T-cell (primary cell): ENCODE measurements at regions of chr6 and their contacts with region 1.

Region 1: DNA sequence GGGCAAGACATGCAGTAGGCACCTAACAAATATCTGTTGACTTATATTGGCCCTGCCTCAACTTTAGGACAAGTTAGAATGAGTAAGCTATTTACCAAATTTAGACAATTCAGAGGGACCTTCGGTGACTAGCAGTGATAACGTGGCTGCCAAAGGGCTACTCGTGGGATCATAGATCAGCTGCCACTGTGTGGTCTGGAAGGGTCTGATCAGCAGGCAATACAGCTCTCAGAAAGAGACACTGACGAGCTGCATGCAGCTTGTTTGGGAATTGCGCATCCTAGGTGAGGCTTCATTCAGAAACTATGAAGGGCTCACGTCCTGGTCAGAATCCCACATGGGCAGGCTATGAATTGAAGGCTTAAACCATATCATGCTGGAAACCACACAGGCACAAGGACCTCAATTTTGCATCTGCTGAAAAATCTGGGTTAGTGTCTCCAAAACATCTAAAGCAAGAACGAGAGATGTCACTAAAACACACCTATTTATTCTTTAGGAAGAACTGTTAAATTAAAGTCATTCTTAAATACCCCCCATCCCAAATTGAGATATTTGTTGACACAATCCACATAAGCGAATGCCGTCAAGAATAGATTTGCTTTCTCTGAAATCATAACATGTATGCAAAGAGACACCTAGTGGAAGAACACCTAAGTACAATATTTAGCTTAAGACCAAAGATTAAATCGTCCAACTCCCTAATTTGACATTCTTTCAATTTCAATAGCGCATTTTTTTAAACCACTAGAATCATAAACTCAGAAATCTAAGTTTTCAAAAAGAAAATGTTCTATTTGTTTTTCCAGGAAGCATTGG is 79.6 kb downstream of the IPCEF1 start:
- DNase-seq: peak in 3 of 35 experiments; percentile 13 to 78 (median 19)
- ATAC-seq: peak; percentile 76 to 82 (median 79)
- H3K4me3 ChIP-seq: peak overlapping the region; percentile 32
- H3K4me3 Mint-ChIP-seq: peak overlapping the region; percentile 66 to 70 (median 69)
- H3K27ac ChIP-seq: peak overlapping the region; percentile 15
- H3K27ac Mint-ChIP-seq: peak overlapping the region; percentile 75 to 78
- H3K4me1 ChIP-seq: peaks cover 15 to 16% of the 10 kb centered on the region in 2 experiments
- H3K4me1 Mint-ChIP-seq: peaks cover 38 to 44% (median 43%) of the 10 kb centered on the region in 3 donors
- H3K27me3 ChIP-seq: no peaks in the 10 kb centered on the region
- H3K27me3 Mint-ChIP-seq: no peaks in the 10 kb centered on the region

Region 2: DNA sequence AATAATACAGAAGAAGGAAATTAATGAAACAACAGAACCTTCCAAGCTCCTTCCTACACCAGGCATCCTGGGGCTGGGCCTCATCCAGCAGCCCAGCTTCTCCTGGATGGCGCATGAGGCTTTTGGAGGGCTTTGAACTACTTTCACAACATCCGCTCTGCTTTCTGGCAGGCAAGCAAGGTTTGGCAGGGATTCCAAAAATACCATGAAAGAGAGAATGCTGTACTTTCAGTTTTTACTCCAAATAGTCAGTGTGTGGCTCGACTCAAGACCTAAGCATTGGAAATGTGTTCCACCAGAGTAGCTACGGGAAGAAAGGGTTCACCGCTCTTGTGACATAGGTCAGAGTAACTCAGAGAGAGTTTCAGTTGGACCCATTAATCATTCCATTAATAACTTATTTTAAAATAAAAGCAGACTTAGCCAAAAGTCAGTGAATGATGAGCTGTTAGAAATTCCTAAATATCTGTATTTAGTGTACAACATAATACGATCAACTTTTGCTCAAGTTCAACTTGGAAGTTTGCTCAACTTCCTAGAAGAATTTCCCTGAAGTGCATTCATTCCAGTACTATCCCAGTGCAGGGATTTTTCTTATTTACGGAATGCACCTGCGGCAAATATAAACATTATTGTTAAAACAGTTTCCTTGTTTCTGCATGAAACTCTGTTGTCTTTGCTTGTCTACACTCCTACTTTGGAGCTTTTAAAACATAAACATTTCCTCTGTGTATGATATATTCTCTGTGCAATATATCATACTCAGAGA is 112.4 kb before region 1 on chr6:
- CTCF ChIA-PET with region 1: interaction called, 4 to 66 read pairs
- POLR2A ChIA-PET with region 1: interaction called in 1 of 2 experiments, 3 read pairs
- DNase-seq: peak in 5 of 35 experiments; percentile 6 to 36 (median 28)
- ATAC-seq: peak in 3 of 4 experiments; percentile 50 to 72 (median 51)
- H3K4me3 ChIP-seq: no peak overlapping the region
- H3K4me3 Mint-ChIP-seq: peak overlapping the region in 1 of 3 donors; percentile 43
- H3K27ac ChIP-seq: no peak overlapping the region
- H3K27ac Mint-ChIP-seq: peak overlapping the region; percentile 85 to 86
- H3K4me1 ChIP-seq: peaks cover 0 to 31% of the 10 kb centered on the region in 2 experiments
- H3K4me1 Mint-ChIP-seq: peaks cover 43 to 53% (median 51%) of the 10 kb centered on the region in 3 donors
- H3K27me3 ChIP-seq: no peaks in the 10 kb centered on the region
- H3K27me3 Mint-ChIP-seq: no peaks in the 10 kb centered on the region

Region 3: DNA sequence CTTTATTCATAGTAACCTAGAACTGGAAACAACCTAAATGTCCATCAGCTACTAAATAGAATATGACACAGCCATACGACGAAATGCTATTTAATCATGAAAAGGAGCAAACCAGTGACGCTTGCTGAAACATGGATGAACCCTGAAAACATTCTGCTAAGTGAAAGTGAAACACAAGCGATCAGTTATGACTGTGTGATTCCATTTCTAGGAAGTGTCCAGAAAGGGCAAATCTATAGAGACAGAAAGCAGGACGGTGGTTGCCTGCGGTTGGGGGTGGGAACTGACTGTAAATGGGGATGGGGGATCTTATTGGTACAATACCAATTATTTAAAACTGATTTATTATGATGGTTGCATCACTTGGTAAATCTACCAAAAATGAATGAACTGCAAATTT is 47.2 kb before region 1 on chr6:
- CTCF ChIA-PET with region 1: interaction called, 8 to 22 read pairs
- POLR2A ChIA-PET with region 1: no interaction called
- DNase-seq: peak in 1 of 35 experiments; percentile 69
- ATAC-seq: peak; percentile 42 to 60 (median 53)
- H3K4me3 ChIP-seq: peak overlapping the region in 1 of 2 donors; percentile 24
- H3K4me3 Mint-ChIP-seq: peak overlapping the region; percentile 72 to 85 (median 80)
- H3K27ac ChIP-seq: peak overlapping the region; percentile 54
- H3K27ac Mint-ChIP-seq: peak overlapping the region; percentile 84 to 85
- H3K4me1 ChIP-seq: peaks cover 31 to 45% of the 10 kb centered on the region in 2 experiments
- H3K4me1 Mint-ChIP-seq: peaks cover 83 to 90% (median 87%) of the 10 kb centered on the region in 3 donors
- H3K27me3 ChIP-seq: no peaks in the 10 kb centered on the region
- H3K27me3 Mint-ChIP-seq: no peaks in the 10 kb centered on the region

Region 4: GRCh38 chr6:154258064-154258757 is 18.8 kb before region 1 on chr6:
- CTCF ChIA-PET with region 1: interaction called, 4 to 6 read pairs
- POLR2A ChIA-PET with region 1: interaction called in 1 of 2 experiments, 19 read pairs
- DNase-seq: no peak
- ATAC-seq: peak in 2 of 4 experiments; percentile 29 to 47
- H3K4me3 ChIP-seq: no peak overlapping the region
- H3K4me3 Mint-ChIP-seq: no peak overlapping the region
- H3K27ac ChIP-seq: no peak overlapping the region
- H3K27ac Mint-ChIP-seq: peak overlapping the region in 1 of 2 donors; percentile 5
- H3K4me1 ChIP-seq: peaks cover 3 to 6% of the 10 kb centered on the region in 2 experiments
- H3K4me1 Mint-ChIP-seq: peaks cover 29 to 35% (median 33%) of the 10 kb centered on the region in 3 donors
- H3K27me3 ChIP-seq: no peaks in the 10 kb centered on the region
- H3K27me3 Mint-ChIP-seq: no peaks in the 10 kb centered on the region

Region 5: GRCh38 chr6:154341871-154342270 is 64.9 kb after region 1 on chr6:
- CTCF ChIA-PET with region 1: no interaction called
- POLR2A ChIA-PET with region 1: no interaction called
- DNase-seq: no peak
- ATAC-seq: no peak
- H3K4me3 ChIP-seq: no peak overlapping the region
- H3K4me3 Mint-ChIP-seq: no peak overlapping the region
- H3K27ac ChIP-seq: no peak overlapping the region
- H3K27ac Mint-ChIP-seq: no peak overlapping the region
- H3K4me1 ChIP-seq: no peaks in the 10 kb centered on the region
- H3K4me1 Mint-ChIP-seq: peaks cover 0 to 5% (median 0%) of the 10 kb centered on the region in 3 donors
- H3K27me3 ChIP-seq: no peaks in the 10 kb centered on the region
- H3K27me3 Mint-ChIP-seq: peaks cover 0 to 4% of the 10 kb centered on the region in 2 donors